Activated naive CD4-positive, alpha-beta T cell treated with anti-CD3 and anti-CD28 coated beads for 36 hours (primary cell): ENCODE measurements at regions of chr5 and their contacts with region 1.

Region 1: DNA sequence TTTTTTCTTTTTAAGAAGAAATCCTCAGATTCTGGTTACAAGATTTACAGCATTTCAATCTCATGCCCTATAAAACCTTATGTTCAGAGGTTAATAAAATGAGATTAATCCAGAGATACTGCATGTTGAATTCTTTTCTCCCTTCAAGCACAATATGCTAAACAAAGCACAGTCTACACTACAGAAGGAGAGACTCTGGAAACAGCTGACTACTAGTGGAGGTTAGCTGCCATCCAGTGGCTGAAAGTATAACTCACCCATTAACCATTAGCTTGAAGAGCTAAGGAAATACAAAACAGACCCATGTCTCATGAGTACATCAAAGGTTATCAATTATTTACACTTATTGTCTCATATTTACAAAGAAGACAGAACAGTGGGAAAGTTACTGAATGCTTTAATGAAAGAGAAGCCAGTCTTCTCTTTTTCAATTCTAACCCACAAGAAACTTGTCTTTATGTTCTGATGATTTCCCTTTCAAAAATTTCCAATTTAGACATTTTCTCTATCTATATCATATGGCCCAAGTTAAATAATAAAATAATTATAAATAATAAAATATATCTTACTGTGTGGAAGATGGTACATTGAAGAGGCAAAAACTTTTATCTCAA is 12.7 kb upstream of the DNAH5 start:
- DNase-seq: peak; percentile 42
- H3K4me3 Mint-ChIP-seq: no peak overlapping the region
- H3K27ac Mint-ChIP-seq: no peak overlapping the region
- H3K4me1 Mint-ChIP-seq: no peaks in the 10 kb centered on the region
- H3K27me3 Mint-ChIP-seq: peaks cover 2% of the 10 kb centered on the region

Region 2: GRCh38 chr5:12292610-12293204 is 1664.4 kb before region 1 on chr5:
- CTCF ChIA-PET with region 1: no interaction called
- intact Hi-C with region 1: loop called (anchors 5 kb)
- DNase-seq: no peak
- H3K4me3 Mint-ChIP-seq: no peak overlapping the region
- H3K27ac Mint-ChIP-seq: no peak overlapping the region
- H3K4me1 Mint-ChIP-seq: no peaks in the 10 kb centered on the region
- H3K27me3 Mint-ChIP-seq: no peaks in the 10 kb centered on the region

Region 3: DNA sequence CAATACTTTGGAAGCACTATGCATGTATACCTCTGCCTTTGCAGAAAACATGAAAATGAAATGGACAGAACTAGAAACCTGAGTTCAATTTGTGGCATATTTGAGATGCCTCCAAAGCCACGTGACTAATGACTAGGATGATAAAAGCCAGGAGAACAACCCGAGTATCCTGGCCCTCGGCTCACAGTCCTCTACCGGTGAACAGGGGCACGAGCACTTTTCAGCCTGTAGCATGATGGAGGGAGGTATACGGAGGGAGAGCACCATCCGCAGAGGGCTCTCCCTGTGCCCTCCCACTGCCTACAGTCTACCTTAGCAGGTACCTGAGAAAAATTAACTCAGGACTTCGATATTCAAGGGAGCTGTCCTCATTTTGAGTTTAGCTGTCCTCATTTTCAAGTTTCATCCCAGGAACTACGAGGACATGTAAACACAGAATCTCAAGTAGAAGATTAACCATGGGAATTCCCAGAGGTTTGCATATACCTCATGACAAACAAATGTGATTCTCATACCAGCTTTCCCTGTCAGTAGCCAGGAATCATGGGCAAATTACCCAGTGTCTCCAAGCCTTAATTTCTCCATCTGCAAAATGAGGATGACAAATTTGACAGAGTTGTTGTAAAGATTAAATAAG is 261.9 kb before region 1 on chr5:
- CTCF ChIA-PET with region 1: no interaction called
- intact Hi-C with region 1: no loop called
- DNase-seq: no peak
- H3K4me3 Mint-ChIP-seq: no peak overlapping the region
- H3K27ac Mint-ChIP-seq: no peak overlapping the region
- H3K4me1 Mint-ChIP-seq: no peaks in the 10 kb centered on the region
- H3K27me3 Mint-ChIP-seq: no peaks in the 10 kb centered on the region

Region 4: DNA sequence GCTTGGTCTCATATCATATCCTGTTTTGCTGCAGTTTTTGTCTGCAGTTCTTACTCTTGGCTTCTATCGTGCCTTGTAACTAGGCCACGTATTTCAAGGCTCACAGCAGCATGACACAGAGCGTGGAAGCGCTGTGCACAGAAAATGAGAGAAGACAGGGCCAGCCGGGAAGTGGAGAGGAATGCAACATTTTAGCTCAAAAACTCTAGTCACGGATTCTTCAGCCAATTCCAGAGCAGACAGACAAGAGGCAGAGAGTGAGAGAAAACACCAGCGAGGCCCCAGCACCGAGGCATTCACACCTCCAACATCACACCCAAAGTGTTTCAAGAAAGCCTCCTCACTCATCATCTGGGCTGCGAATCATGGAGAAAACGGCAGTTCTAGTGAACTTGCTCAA is 173.4 kb before region 1 on chr5:
- CTCF ChIA-PET with region 1: no interaction called
- intact Hi-C with region 1: loop called (anchors 10 kb)
- DNase-seq: no peak
- H3K4me3 Mint-ChIP-seq: no peak overlapping the region
- H3K27ac Mint-ChIP-seq: no peak overlapping the region
- H3K4me1 Mint-ChIP-seq: no peaks in the 10 kb centered on the region
- H3K27me3 Mint-ChIP-seq: no peaks in the 10 kb centered on the region

Region 5: GRCh38 chr5:13994621-13995253 is 37.6 kb after region 1 on chr5:
- CTCF ChIA-PET with region 1: no interaction called
- intact Hi-C with region 1: no loop called
- DNase-seq: no peak
- H3K4me3 Mint-ChIP-seq: no peak overlapping the region
- H3K27ac Mint-ChIP-seq: no peak overlapping the region
- H3K4me1 Mint-ChIP-seq: no peaks in the 10 kb centered on the region
- H3K27me3 Mint-ChIP-seq: peaks cover 6% of the 10 kb centered on the region